HCT116 (cell line): ENCODE measurements at regions of chr1 and their contacts with region 1.

Region 1: GRCh38 chr1:26233903-26234643 is at the start of gene CEP85:
- DNase-seq: peak; percentile 97
- ATAC-seq: peak; percentile 93
- H3K4me3 ChIP-seq: peak within 1 kb of the TSS; percentile 98
- H3K27ac ChIP-seq: peak within 1 kb of the TSS; percentile 68
- H3K4me1 ChIP-seq: peaks cover 21 to 38% of the 10 kb centered on the region in 2 experiments
- H3K27me3 ChIP-seq: no peaks in the 10 kb centered on the region
- CTCF ChIP-seq: peak; percentile 89 to 92 (median 90)
- POLR2A ChIP-seq: peak; percentile 91
- RAD21 ChIP-seq: peak; percentile 77
- total RNA-seq, gene CEP85: 37.2 TPM

Region 2: GRCh38 chr1:25912076-25912831 is 321.8 kb before region 1 on chr1:
- CTCF ChIA-PET with region 1: no interaction called
- POLR2A ChIA-PET with region 1: no interaction called
- RAD21 ChIA-PET with region 1: no interaction called
- intact Hi-C with region 1: no loop called
- DNase-seq: no peak
- ATAC-seq: no peak
- H3K4me3 ChIP-seq: no peak overlapping the region
- H3K27ac ChIP-seq: no peak overlapping the region
- H3K4me1 ChIP-seq: peaks cover 0 to 8% of the 10 kb centered on the region in 2 experiments; a peak in 1 of 4 replicates
- H3K27me3 ChIP-seq: no peaks in the 10 kb centered on the region
- CTCF ChIP-seq: no peak
- POLR2A ChIP-seq: no peak
- RAD21 ChIP-seq: no peak

Region 3: GRCh38 chr1:26111530-26112406 is 122.3 kb before region 1 on chr1 and contains the start of gene PDIK1L:
- CTCF ChIA-PET with region 1: no interaction called
- POLR2A ChIA-PET with region 1: no interaction called
- RAD21 ChIA-PET with region 1: no interaction called
- intact Hi-C with region 1: loop called (anchors 5 kb)
- DNase-seq: peak; percentile 93
- ATAC-seq: peak; percentile 84
- H3K4me3 ChIP-seq: peak within 1 kb of the TSS; percentile 94 to 98
- H3K27ac ChIP-seq: peak within 1 kb of the TSS; percentile 89
- H3K4me1 ChIP-seq: peaks cover 14 to 21% of the 10 kb centered on the region in 2 experiments
- H3K27me3 ChIP-seq: no peaks in the 10 kb centered on the region
- CTCF ChIP-seq: no peak
- POLR2A ChIP-seq: peak; percentile 43
- RAD21 ChIP-seq: no peak
- total RNA-seq, gene PDIK1L: 8.8 TPM

Region 4: DNA sequence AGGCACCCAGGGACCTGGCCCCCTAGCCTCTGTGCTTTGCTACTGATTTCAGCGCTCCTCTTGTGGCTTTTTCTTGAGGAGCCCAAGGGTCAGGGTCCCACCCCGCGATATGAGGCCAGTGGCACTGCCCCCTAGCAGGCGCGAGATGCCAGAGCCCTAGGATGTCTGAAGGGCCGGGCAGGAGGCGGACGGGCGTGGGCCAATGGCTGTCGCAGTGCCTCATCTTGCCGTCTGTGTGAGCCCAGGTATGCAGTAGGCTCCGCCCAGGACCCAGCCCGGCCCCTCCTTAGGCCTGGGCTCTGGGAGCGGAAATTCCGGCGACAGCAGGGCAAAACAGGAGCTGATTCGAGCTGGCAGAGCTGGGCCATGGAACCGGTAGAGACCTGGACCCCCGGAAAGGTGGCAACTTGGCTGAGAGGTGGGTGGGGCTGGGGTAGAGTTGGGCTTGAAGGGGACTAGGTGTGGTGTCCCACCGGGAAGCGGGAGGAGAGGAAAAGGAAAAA is 56.8 kb before region 1 on chr1 and contains the start of gene CNKSR1:
- CTCF ChIA-PET with region 1: interaction called, 18 read pairs
- POLR2A ChIA-PET with region 1: interaction called, 7 read pairs
- RAD21 ChIA-PET with region 1: no interaction called
- intact Hi-C with region 1: loop called (anchors 5 kb)
- DNase-seq: peak; percentile 84
- ATAC-seq: peak; percentile 100
- H3K4me3 ChIP-seq: peak within 1 kb of the TSS; percentile 65 to 72
- H3K27ac ChIP-seq: peak within 1 kb of the TSS; percentile 46
- H3K4me1 ChIP-seq: peaks cover 11 to 25% of the 10 kb centered on the region in 2 experiments
- H3K27me3 ChIP-seq: no peaks in the 10 kb centered on the region
- CTCF ChIP-seq: peak; percentile 20 to 71 (median 61); a peak in 5 of 6 replicates
- POLR2A ChIP-seq: peak; percentile 63
- RAD21 ChIP-seq: no peak
- total RNA-seq, gene CNKSR1: 26.6 TPM

Region 5: DNA sequence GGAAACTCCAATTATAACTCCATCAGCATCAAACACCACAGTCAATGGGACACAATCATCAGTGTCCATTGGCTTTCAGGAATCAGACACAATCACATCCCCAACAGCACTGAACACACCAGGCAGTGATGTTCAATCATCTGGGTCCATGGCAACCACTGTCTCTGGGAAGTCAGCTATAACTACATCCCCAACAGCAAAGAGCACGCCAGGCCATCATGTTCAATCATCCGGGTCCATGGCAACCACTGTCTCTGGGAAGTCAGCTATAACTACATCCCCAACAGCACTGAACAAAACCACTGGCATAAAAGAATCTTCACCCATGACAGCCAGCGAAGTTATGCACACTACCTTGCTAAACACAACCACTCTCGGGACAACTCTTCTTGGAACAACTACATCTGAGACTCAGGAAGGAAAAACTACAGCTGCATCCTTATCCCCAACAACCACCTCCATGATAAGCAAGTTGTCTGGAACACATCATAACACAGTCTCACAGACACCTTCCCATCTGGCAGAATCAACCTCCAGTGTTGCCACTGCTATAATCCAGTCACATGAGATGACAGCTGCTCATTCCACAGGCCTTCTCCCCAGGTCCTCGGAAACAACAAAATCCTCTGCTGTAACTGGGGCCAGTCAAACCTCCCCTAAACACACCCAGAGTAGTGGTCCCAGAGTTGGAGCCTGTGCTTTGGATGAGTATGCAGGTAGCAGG is 23.8 kb before region 1 on chr1:
- CTCF ChIA-PET with region 1: interaction called, 11 read pairs
- POLR2A ChIA-PET with region 1: no interaction called
- RAD21 ChIA-PET with region 1: no interaction called
- intact Hi-C with region 1: no loop called
- DNase-seq: no peak
- ATAC-seq: no peak
- H3K4me3 ChIP-seq: no peak overlapping the region
- H3K27ac ChIP-seq: no peak overlapping the region
- H3K4me1 ChIP-seq: no peaks in the 10 kb centered on the region
- H3K27me3 ChIP-seq: no peaks in the 10 kb centered on the region
- CTCF ChIP-seq: no peak
- POLR2A ChIP-seq: no peak
- RAD21 ChIP-seq: no peak

Region 6: GRCh38 chr1:26279456-26280332 is 45.6 kb after region 1 on chr1 and contains the start of gene SH3BGRL3:
- CTCF ChIA-PET with region 1: interaction called, 20 read pairs
- POLR2A ChIA-PET with region 1: no interaction called
- RAD21 ChIA-PET with region 1: no interaction called
- intact Hi-C with region 1: no loop called
- DNase-seq: peak; percentile 57
- ATAC-seq: peak; percentile 79
- H3K4me3 ChIP-seq: peak within 1 kb of the TSS; percentile 74 to 76
- H3K27ac ChIP-seq: peak within 1 kb of the TSS; percentile 81
- H3K4me1 ChIP-seq: peaks cover 41 to 95% of the 10 kb centered on the region in 2 experiments
- H3K27me3 ChIP-seq: no peaks in the 10 kb centered on the region
- CTCF ChIP-seq: peak in 2 of 3 experiments; percentile 70 to 77; a peak in 4 of 6 replicates
- POLR2A ChIP-seq: peak; percentile 68
- RAD21 ChIP-seq: no peak
- total RNA-seq, gene SH3BGRL3: 112 TPM

Region 7: DNA sequence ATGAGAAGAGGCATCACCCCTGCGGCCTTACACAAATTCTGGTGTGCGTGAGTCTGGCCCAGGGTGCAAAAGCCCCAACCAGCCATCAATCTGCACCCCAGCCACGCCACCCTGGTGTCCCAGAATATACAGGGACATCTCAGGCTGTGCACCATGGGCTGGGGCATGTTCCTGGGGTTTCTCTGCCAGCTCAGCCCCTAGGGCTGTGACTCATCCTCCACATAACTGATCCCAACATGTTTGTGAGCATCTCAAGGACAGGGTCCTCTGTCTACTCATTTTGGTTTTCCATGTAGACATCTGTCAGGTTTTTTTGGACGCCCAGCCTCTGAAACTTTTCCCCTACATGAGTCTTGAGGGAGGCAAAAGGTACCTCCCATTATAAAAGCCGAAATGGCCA is 138.0 kb after region 1 on chr1:
- CTCF ChIA-PET with region 1: no interaction called
- POLR2A ChIA-PET with region 1: no interaction called
- RAD21 ChIA-PET with region 1: no interaction called
- intact Hi-C with region 1: no loop called
- DNase-seq: no peak
- ATAC-seq: 0 out of 2 replicates have a peak, but pooled peaks have one; percentile 44
- H3K4me3 ChIP-seq: no peak overlapping the region
- H3K27ac ChIP-seq: no peak overlapping the region
- H3K4me1 ChIP-seq: peaks cover 3 to 6% of the 10 kb centered on the region in 2 experiments; a peak in 2 of 4 replicates
- H3K27me3 ChIP-seq: no peaks in the 10 kb centered on the region
- CTCF ChIP-seq: no peak
- POLR2A ChIP-seq: no peak
- RAD21 ChIP-seq: no peak